Ovary (tissue), 10 donors: ENCODE measurements at regions of chr5 and their contacts with region 1.

Region 1: GRCh38 chr5:3531320-3531986 is 64.2 kb upstream of the IRX1 start:
- DNase-seq: no peak
- H3K4me3 ChIP-seq: no peak overlapping the region
- H3K27ac ChIP-seq: no peak overlapping the region
- H3K4me1 ChIP-seq: no peaks in the 10 kb centered on the region
- H3K27me3 ChIP-seq: no peaks in the 10 kb centered on the region
- CTCF ChIP-seq: no peak
- EP300 ChIP-seq: no peak
- POLR2A ChIP-seq: no peak

Region 2: DNA sequence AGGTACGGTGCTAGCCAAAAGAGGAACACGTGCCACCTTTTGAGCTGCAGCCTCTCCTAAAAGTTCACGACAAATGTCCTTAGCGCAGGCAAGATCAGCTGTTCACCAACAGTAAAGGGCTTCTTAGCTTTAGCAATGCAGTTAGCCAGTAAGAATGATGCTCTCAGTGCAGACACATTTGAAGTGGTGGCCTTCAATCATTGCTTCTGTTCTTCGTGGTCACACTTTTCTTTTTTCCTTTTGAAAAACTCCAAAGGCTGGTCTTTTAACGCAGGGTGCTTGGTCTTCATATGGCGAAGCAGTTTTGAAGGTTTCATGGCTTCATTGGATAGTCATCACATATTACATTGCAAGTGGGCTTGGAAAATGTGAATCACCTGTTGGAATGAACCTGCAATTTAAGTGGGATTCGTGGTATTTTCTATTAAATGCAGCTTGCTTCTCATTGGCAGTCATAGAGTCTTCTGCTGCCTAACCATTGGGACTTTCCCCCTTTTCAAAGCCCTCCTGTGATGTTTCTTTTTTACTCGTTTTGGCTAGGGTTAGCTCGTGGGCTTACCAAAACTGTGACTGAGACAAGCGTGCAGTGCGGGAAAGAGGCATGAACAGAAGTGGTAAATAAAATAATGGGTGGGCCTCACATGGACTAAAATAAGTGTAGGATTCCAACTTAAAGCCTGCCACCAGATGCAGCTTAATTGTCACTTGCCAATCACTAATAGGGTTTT is 1832.7 kb before region 1 on chr5:
- intact Hi-C with region 1: loop called in 1 of 4 experiments (anchors 5 kb)
- DNase-seq: no peak
- H3K4me3 ChIP-seq: no peak overlapping the region
- H3K27ac ChIP-seq: no peak overlapping the region
- H3K4me1 ChIP-seq: no peaks in the 10 kb centered on the region
- H3K27me3 ChIP-seq: no peaks in the 10 kb centered on the region
- CTCF ChIP-seq: no peak
- EP300 ChIP-seq: no peak
- POLR2A ChIP-seq: no peak

Region 3: DNA sequence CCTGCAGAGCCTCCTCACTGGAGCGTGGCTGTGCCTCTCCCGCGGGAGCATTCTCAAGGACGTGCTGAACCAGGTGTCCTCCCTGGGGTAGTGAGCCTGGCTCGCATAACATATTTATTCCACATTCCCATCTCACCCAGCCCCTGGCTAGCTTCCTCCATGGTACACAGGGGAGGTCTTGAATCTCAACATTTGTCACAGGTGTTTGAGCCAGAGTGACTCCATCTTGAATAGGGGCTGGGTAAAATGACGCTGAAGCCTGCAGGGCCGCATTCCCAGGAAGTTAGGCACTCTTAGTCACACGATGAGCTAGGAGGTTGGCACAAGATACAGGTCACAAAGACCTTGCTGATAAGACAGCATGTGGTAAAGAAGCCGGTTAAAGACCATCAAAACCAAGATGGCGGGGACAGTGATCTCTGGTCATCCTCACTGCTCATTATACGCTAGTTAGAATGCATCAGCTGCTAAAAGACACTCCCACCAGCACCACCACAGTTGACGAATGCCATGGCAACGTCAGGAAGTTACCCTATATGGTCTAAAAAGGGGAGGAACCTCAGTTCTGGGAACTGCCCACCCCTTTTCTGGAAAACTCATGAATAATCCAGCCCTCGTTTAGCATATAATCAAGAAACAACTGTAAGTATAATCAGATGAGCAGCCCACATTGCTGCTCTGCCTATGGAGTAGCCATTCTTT is 1374.9 kb before region 1 on chr5:
- intact Hi-C with region 1: loop called in 1 of 4 experiments (anchors 5 kb)
- DNase-seq: no peak
- H3K4me3 ChIP-seq: no peak overlapping the region
- H3K27ac ChIP-seq: no peak overlapping the region
- H3K4me1 ChIP-seq: no peaks in the 10 kb centered on the region
- H3K27me3 ChIP-seq: no peaks in the 10 kb centered on the region
- CTCF ChIP-seq: no peak
- EP300 ChIP-seq: no peak
- POLR2A ChIP-seq: no peak

Region 4: GRCh38 chr5:3126639-3127038 is 404.8 kb before region 1 on chr5:
- intact Hi-C with region 1: no loop called
- DNase-seq: no peak
- H3K4me3 ChIP-seq: no peak overlapping the region
- H3K27ac ChIP-seq: no peak overlapping the region
- H3K4me1 ChIP-seq: no peaks in the 10 kb centered on the region
- H3K27me3 ChIP-seq: no peaks in the 10 kb centered on the region
- CTCF ChIP-seq: no peak
- EP300 ChIP-seq: no peak
- POLR2A ChIP-seq: no peak

Region 5: GRCh38 chr5:3187771-3188425 is 343.6 kb before region 1 on chr5:
- intact Hi-C with region 1: no loop called
- DNase-seq: no peak
- H3K4me3 ChIP-seq: no peak overlapping the region
- H3K27ac ChIP-seq: no peak overlapping the region
- H3K4me1 ChIP-seq: no peaks in the 10 kb centered on the region
- H3K27me3 ChIP-seq: no peaks in the 10 kb centered on the region
- CTCF ChIP-seq: no peak
- EP300 ChIP-seq: no peak
- POLR2A ChIP-seq: no peak